MCF 10A (cell line): ENCODE measurements at regions of chr2 and their contacts with region 1.

Region 1: GRCh38 chr2:240566203-240567136 is 1.8 kb upstream of the RNPEPL1 start:
- DNase-seq: peak; percentile 91
- H3K4me3 Mint-ChIP-seq: peak overlapping the region; percentile 78
- H3K27ac Mint-ChIP-seq: peak overlapping the region; percentile 80
- H3K4me1 Mint-ChIP-seq: peaks cover 34% of the 10 kb centered on the region
- H3K27me3 Mint-ChIP-seq: no peaks in the 10 kb centered on the region
- CTCF ChIP-seq: peak; percentile 89

Region 2: DNA sequence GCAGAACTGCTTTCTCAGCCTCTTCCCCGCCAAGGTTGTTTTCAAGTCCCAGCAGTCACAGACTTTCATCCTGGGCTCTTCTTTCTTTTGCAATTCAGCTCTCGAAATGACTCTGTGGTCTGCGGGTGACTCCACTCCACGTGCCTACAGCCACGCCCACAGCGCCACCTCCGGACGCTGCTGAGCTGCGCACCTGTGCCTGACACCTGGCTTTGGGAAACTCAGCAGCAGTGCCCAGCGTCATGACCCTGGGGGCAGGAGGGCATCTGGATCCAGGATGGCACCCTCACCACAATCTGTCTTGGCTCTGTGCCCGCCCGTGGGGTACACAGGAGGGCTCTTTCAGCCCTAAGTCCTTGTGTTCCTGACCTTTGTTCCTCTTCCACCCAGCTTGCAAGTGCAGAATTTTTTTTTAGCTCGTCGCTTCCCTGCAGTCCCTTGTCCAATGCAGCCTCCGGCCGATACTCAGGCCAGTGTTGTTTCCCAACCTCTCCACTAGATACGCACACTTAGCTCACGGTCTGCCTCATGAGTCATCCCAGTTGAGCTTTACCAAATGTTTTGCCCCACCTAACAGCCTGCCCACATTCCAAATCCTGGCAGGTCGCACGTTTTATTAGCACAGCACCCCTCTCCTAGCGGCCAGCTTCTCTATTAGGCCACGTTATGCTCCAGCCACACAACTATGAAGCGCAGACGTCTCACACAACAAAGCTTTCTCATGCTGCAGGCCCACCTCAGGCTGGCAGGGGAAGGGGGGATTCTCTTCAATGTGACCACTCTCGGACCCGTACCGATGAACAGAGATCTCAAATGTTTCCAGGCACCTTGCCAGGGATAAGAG is 13.5 kb after region 1 on chr2:
- CTCF ChIA-PET with region 1: interaction called, 52 read pairs
- POLR2A ChIA-PET with region 1: interaction called, 275 read pairs
- intact Hi-C with region 1: no loop called
- DNase-seq: peak; percentile 98
- H3K4me3 Mint-ChIP-seq: peak overlapping the region; percentile 73
- H3K27ac Mint-ChIP-seq: peak overlapping the region; percentile 99
- H3K4me1 Mint-ChIP-seq: peaks cover 46% of the 10 kb centered on the region
- H3K27me3 Mint-ChIP-seq: no peaks in the 10 kb centered on the region
- CTCF ChIP-seq: no peak

Region 3: DNA sequence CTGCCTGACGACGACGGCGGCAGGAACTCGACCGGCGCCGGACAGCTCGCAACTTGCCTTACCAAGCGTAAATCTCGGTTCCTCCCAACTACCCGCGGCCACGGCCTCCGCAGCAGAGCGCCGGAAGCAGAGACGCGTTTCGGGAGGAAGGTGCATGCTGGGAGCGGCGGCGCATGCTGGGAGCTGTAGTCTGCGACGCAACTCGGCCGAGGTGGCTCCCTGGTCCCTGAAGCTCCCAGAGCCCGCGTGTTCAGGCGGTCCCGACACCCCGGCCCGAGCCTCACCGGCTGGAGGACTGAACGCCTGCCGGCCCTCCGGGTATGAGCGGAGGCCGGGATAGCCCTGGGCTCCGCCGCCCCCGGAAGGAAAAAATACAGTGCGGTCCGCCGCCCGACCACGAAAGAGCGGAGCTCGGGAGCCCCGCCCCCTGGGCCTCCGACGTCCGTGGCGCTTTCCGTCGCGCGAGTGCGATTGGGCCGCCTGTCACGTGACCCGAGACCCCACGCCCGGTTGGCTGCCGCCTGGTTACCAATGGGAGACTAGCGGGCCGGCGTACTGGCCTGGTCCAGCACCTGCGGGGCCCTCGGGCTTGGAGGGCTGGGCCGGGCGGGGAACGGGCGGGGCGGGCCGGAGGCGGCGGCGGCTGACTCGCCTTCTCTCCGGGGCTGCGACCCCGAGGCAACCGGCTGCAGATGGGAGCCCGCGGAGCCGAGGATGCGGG is 19.9 kb after region 1 on chr2 and contains the start of gene CAPN10:
- CTCF ChIA-PET with region 1: interaction called, 52 read pairs
- POLR2A ChIA-PET with region 1: interaction called, 275 read pairs
- intact Hi-C with region 1: loop called (anchors 2 kb)
- DNase-seq: peak; percentile 96
- H3K4me3 Mint-ChIP-seq: peak within 1 kb of the TSS; percentile 87
- H3K27ac Mint-ChIP-seq: peak within 1 kb of the TSS; percentile 94
- H3K4me1 Mint-ChIP-seq: peaks cover 35% of the 10 kb centered on the region
- H3K27me3 Mint-ChIP-seq: no peaks in the 10 kb centered on the region
- CTCF ChIP-seq: no peak
- total RNA-seq, gene CAPN10: 27.6 and 35.2 TPM in 2 replicates

Region 4: GRCh38 chr2:240733803-240734495 is 167.5 kb after region 1 on chr2:
- CTCF ChIA-PET with region 1: no interaction called
- POLR2A ChIA-PET with region 1: no interaction called
- intact Hi-C with region 1: no loop called
- DNase-seq: peak; percentile 11
- H3K4me3 Mint-ChIP-seq: no peak overlapping the region
- H3K27ac Mint-ChIP-seq: no peak overlapping the region
- H3K4me1 Mint-ChIP-seq: no peaks in the 10 kb centered on the region
- H3K27me3 Mint-ChIP-seq: peaks cover 29% of the 10 kb centered on the region
- CTCF ChIP-seq: peak; percentile 25

Region 5: DNA sequence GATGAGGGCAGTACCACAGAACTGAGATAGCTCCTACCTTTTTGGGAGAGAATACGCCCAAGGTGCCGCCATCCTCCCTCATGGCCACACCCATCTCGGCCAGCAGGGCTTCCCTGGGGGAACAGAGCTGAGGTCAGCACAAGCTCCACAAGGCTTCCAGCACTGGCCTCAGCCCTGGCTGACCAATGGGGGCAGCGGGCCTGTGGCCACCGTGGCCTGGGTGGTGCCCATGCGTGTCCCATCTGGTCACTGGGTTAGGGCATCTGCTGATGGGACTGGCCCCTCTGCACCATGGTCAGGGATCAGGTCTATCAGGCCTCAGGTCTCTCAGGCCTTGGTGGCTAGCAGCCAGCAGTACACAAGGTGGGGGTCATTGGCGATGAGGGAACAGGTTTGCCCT is 202.6 kb after region 1 on chr2:
- CTCF ChIA-PET with region 1: no interaction called
- POLR2A ChIA-PET with region 1: no interaction called
- intact Hi-C with region 1: no loop called
- DNase-seq: no peak
- H3K4me3 Mint-ChIP-seq: no peak overlapping the region
- H3K27ac Mint-ChIP-seq: no peak overlapping the region
- H3K4me1 Mint-ChIP-seq: no peaks in the 10 kb centered on the region
- H3K27me3 Mint-ChIP-seq: no peaks in the 10 kb centered on the region
- CTCF ChIP-seq: no peak